WTC11 (cell line): ENCODE measurements at regions of chr11 and their contacts with region 1.

Region 1: GRCh38 chr11:58059007-58059350 is 28.2 kb downstream of the OR6Q1 start:
- DNase-seq: no peak
- ATAC-seq: peak; percentile 51
- H3K4me3 Mint-ChIP-seq: no peak overlapping the region
- H3K27ac Mint-ChIP-seq: 0 out of 2 replicates have a peak overlapping the region, but pooled peaks have one; percentile 49
- H3K4me1 Mint-ChIP-seq: peaks cover 47% of the 10 kb centered on the region
- H3K27me3 Mint-ChIP-seq: no peaks in the 10 kb centered on the region
- CTCF ChIP-seq: no peak

Region 2: DNA sequence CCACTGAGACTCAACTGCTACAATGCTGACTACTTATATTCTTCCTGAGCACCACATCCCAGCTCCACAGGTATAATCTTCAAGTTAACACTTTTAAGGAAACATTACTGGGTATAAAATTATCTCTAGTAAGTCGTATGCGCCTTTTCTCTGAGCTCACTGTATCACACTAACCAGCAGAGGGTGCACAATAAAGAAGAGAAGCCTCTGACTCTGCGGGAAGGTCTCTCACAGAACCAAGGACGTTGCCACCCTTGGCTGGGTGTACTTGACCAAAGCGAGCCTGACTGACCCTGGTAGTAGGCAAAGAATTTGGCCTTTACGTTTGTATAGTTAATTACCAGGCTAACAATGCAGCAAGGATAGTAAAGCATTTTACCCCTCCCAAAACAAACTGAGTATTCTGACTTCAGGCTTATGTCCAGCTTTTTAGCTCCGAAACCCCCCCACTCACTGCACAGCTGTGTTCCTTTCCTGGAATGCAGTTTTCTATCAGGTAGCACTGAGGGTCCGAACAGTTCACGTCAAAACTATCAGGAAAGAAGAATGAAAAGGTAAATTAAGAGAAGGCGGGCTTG is 307.2 kb before region 1 on chr11 and contains the start of gene BTBD18:
- CTCF ChIA-PET with region 1: interaction called, 16 read pairs
- POLR2A ChIA-PET with region 1: no interaction called
- DNase-seq: peak; percentile 32
- ATAC-seq: peak; percentile 86
- H3K4me3 Mint-ChIP-seq: no peak within 1 kb of the TSS
- H3K27ac Mint-ChIP-seq: peak within 1 kb of the TSS; percentile 75
- H3K4me1 Mint-ChIP-seq: peaks cover 21% of the 10 kb centered on the region
- H3K27me3 Mint-ChIP-seq: no peaks in the 10 kb centered on the region
- CTCF ChIP-seq: peak; percentile 24; the same call in 1 of the 2 replicates
- total RNA-seq, gene BTBD18: 0.09 to 0.14 TPM in 2 of 3 replicates, not detected in the other

Region 3: GRCh38 chr11:57815877-57816276 is 243.1 kb before region 1 on chr11:
- CTCF ChIA-PET with region 1: interaction called, 10 read pairs
- POLR2A ChIA-PET with region 1: no interaction called
- DNase-seq: no peak
- ATAC-seq: no peak
- H3K4me3 Mint-ChIP-seq: no peak overlapping the region
- H3K27ac Mint-ChIP-seq: 0 out of 2 replicates have a peak overlapping the region, but pooled peaks have one; percentile 13
- H3K4me1 Mint-ChIP-seq: no peaks in the 10 kb centered on the region
- H3K27me3 Mint-ChIP-seq: no peaks in the 10 kb centered on the region
- CTCF ChIP-seq: no peak

Region 4: GRCh38 chr11:57823859-57824258 is 235.1 kb before region 1 on chr11:
- CTCF ChIA-PET with region 1: interaction called, 11 read pairs
- POLR2A ChIA-PET with region 1: no interaction called
- DNase-seq: no peak
- ATAC-seq: no peak; the same call in 1 of the 2 replicates
- H3K4me3 Mint-ChIP-seq: no peak overlapping the region
- H3K27ac Mint-ChIP-seq: no peak overlapping the region
- H3K4me1 Mint-ChIP-seq: no peaks in the 10 kb centered on the region
- H3K27me3 Mint-ChIP-seq: no peaks in the 10 kb centered on the region
- CTCF ChIP-seq: no peak

Region 5: DNA sequence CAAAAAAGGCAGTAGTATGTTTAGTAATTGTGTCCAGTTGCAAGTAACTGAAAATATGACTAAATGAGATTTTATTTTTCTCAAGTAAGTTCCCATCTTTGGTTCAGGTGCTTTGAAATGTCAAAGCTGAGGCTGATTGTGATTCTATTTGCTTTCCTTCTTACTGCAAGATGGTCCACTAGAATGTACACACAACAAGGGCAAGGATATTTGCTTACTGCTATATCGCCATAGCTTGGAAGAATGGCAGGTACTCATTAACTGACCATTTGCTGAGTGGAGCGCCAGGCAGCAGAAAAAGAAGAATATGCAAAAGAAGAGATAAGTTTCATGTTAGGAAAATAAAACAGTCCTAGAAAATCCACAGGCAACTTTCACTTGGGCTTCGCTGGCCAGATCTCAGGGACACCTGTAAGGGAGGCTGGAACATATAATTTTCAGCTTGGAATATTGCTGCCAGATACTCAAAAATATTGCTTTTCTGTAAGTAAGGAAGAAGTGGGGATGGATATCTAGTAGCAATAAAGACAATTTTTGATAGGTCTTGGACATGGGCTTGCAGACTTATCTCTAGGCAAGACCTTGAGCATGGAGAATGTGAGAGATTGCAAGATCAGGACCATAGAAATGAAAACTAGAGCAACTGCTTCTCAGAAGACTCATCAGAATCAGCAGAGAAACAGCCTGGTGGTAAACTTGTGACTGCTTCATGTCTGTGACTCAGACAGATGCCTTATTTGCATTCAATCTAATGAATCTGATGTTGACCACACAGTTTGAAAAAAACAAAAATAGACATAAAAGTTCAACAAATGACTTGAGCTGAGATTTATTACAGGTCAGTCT is 80.1 kb before region 1 on chr11:
- CTCF ChIA-PET with region 1: interaction called, 11 read pairs
- POLR2A ChIA-PET with region 1: interaction called, 3 read pairs
- DNase-seq: no peak
- ATAC-seq: no peak
- H3K4me3 Mint-ChIP-seq: no peak overlapping the region
- H3K27ac Mint-ChIP-seq: no peak overlapping the region
- H3K4me1 Mint-ChIP-seq: peaks cover 14% of the 10 kb centered on the region
- H3K27me3 Mint-ChIP-seq: no peaks in the 10 kb centered on the region; the same call in 1 of the 2 replicates
- CTCF ChIP-seq: no peak

Region 6: DNA sequence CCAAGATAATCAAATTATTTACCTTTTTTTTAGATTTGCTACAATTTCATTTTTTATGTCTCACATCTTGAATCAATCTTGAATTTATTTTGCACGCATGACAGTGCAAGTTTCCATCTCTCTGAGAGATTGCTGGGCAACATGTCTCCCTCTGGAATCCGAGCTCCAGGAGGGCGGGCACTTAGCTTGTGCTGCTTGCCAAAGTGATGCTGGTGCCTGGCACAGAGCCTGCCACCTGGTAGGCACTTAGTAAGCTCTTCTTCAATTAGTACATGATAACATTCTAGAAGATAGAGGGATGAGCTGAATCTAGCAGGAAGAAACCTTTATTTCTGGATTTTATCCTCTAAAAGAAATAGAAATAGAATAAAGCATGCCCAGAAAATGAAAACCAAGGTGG is 93.8 kb after region 1 on chr11:
- CTCF ChIA-PET with region 1: no interaction called
- POLR2A ChIA-PET with region 1: no interaction called
- DNase-seq: no peak
- ATAC-seq: no peak
- H3K4me3 Mint-ChIP-seq: no peak overlapping the region
- H3K27ac Mint-ChIP-seq: no peak overlapping the region
- H3K4me1 Mint-ChIP-seq: no peaks in the 10 kb centered on the region
- H3K27me3 Mint-ChIP-seq: no peaks in the 10 kb centered on the region; the same call in 1 of the 2 replicates
- CTCF ChIP-seq: no peak

Region 7: DNA sequence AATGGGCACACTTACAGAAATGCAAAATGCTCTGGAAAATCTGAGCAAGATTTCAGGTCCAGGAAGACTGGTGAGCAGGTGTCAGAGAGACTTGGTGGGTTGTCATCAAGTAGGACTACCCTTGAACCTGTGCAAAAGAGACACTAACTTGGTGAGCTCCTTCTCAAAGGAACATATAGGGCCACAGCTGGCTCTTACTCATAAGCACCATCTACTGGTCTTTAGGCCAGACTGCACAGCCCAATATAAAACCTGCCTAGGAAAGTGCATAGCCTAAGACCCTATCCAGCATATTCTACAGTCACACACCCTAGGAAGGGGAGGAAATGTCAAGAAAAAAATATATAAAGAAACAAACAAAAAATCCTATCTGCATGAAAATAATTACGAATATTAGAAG is 227.3 kb after region 1 on chr11:
- CTCF ChIA-PET with region 1: interaction called, 37 read pairs
- POLR2A ChIA-PET with region 1: no interaction called
- DNase-seq: no peak
- ATAC-seq: peak; percentile 97
- H3K4me3 Mint-ChIP-seq: no peak overlapping the region
- H3K27ac Mint-ChIP-seq: no peak overlapping the region
- H3K4me1 Mint-ChIP-seq: no peaks in the 10 kb centered on the region
- H3K27me3 Mint-ChIP-seq: no peaks in the 10 kb centered on the region
- CTCF ChIP-seq: no peak; the same call in 1 of the 2 replicates

Region 8: DNA sequence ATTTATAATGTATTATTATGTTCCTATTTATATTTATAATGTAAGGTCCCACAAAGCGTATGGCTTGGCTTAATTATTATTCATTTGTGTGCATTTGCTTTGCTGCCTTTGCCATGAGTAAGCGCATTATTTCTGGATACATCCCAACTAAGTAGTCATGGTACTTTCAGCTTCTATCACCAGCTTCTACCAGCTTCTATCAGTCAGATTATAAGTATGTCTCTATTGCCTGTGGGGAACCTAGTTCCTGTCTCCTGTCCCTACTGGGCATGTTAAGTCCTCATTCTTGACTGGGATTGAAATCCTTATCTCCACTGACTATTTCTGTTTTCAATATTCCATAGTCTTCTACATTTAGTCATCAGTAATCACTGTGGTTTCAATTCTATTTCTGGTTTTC is 242.6 kb after region 1 on chr11:
- CTCF ChIA-PET with region 1: no interaction called
- POLR2A ChIA-PET with region 1: no interaction called
- DNase-seq: no peak
- ATAC-seq: no peak
- H3K4me3 Mint-ChIP-seq: no peak overlapping the region
- H3K27ac Mint-ChIP-seq: no peak overlapping the region
- H3K4me1 Mint-ChIP-seq: no peaks in the 10 kb centered on the region
- H3K27me3 Mint-ChIP-seq: no peaks in the 10 kb centered on the region
- CTCF ChIP-seq: no peak

Region 9: DNA sequence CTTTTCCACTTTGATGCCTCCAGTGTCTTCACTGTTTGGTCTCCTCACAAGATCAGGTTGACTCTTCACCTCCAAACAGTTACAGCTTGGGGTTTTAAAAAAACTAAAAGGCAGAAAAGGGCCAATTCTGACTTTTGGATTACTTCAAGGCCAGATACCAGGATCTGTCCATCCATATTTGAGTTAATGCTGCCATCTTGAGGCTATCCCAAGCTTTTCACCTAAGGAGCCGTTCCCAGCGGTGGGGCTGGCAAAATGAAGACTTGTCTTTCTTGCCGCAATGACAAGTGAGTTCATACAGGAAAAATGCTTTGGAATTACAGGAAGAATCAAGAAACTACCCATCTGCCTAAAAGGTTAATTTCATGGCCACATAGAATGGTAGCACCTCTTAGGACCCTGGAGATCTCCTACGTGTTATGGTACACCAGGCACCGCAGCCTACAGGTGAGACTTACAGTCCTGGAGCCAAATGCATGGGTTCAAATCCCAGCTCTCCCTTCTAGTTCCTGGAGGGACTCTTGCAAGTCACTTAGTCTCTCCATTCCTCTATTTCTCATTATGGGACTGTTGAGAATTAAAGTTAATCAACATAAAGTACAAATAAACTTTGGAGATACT is 454.9 kb after region 1 on chr11:
- CTCF ChIA-PET with region 1: interaction called, 20 read pairs
- POLR2A ChIA-PET with region 1: no interaction called
- DNase-seq: peak; percentile 64
- ATAC-seq: peak; percentile 87
- H3K4me3 Mint-ChIP-seq: no peak overlapping the region
- H3K27ac Mint-ChIP-seq: no peak overlapping the region
- H3K4me1 Mint-ChIP-seq: peaks cover 16% of the 10 kb centered on the region
- H3K27me3 Mint-ChIP-seq: 0 out of 2 replicates have a peak, but pooled peaks cover 5% of the 10 kb centered on the region
- CTCF ChIP-seq: 0 out of 2 replicates have a peak, but pooled peaks have one; percentile 41